K562 (cell line): ENCODE measurements at regions of chr3 and their contacts with region 1.

Region 1: GRCh38 chr3:23242106-23242505 is 39.0 kb downstream of the UBE2E2 start:
- DNase-seq: no peak
- ATAC-seq: no peak
- H3K4me3 ChIP-seq: no peak overlapping the region
- H3K27ac ChIP-seq: no peak overlapping the region
- H3K4me1 ChIP-seq: no peaks in the 10 kb centered on the region
- H3K27me3 ChIP-seq: no peaks in the 10 kb centered on the region
- CTCF ChIP-seq: no peak
- EP300 ChIP-seq: no peak
- POLR2A ChIP-seq: no peak
- RAD21 ChIP-seq: no peak

Region 2: DNA sequence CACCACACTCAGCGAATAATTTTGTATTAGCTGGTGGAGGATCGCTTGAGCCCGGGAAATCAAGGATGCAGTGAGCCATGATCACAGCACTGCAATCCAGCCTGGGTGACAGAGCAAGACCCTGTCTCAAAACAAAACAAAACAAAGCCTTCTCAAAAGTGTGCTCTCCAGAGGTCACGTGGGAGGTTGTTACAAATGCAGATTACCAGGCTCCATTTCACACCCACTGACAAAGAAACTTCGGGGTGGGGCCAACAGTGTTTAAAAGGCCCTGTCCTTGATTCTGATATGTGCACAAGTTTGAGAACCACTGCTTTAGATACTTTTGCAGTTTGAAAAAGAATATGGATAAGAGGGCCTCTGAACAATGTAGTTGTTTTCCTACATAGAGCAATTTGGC is 41.5 kb after region 1 on chr3:
- CTCF ChIA-PET with region 1: no interaction called
- POLR2A ChIA-PET with region 1: no interaction called
- in situ Hi-C with region 1: no loop called
- intact Hi-C with region 1: loop called (anchors 2 kb)
- DNase-seq: no peak
- ATAC-seq: no peak
- H3K4me3 ChIP-seq: no peak overlapping the region
- H3K27ac ChIP-seq: no peak overlapping the region
- H3K4me1 ChIP-seq: no peaks in the 10 kb centered on the region
- H3K27me3 ChIP-seq: no peaks in the 10 kb centered on the region
- CTCF ChIP-seq: no peak
- EP300 ChIP-seq: no peak
- POLR2A ChIP-seq: no peak
- RAD21 ChIP-seq: no peak